A673 (cell line): ENCODE measurements at regions of chr13 and their contacts with region 1.

Region 1: GRCh38 chr13:41054212-41054877 is 7.0 kb upstream of the WBP4 start:
- DNase-seq: peak; percentile 77
- H3K4me3 ChIP-seq: no peak overlapping the region
- H3K27ac ChIP-seq: no peak overlapping the region
- H3K4me1 ChIP-seq: peaks cover 14% of the 10 kb centered on the region
- H3K27me3 ChIP-seq: no peaks in the 10 kb centered on the region
- CTCF ChIP-seq: peak; percentile 76

Region 2: DNA sequence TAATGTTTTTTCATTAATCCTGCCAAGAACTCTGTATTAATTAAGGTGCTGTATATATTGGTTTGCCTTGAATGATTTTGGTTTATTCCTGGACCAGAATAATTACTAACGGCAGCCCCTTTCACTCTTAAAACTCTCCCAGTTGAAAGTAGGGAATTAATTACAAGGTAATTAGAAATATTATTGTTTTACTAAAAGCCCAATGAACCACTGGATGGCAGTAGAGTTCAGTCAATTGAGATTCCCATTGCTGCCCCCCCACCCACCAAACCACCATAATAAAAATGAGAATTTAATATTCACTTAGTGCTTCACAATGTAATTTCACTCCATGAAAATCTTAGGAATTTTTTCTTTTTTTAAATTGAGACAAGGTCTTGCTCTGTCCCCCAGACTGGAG is 20.7 kb after region 1 on chr13:
- CTCF ChIA-PET with region 1: no interaction called
- POLR2A ChIA-PET with region 1: no interaction called
- intact Hi-C with region 1: no loop called
- DNase-seq: peak; percentile 40
- H3K4me3 ChIP-seq: no peak overlapping the region
- H3K27ac ChIP-seq: no peak overlapping the region
- H3K4me1 ChIP-seq: no peaks in the 10 kb centered on the region
- H3K27me3 ChIP-seq: no peaks in the 10 kb centered on the region
- CTCF ChIP-seq: peak; percentile 59

Region 3: DNA sequence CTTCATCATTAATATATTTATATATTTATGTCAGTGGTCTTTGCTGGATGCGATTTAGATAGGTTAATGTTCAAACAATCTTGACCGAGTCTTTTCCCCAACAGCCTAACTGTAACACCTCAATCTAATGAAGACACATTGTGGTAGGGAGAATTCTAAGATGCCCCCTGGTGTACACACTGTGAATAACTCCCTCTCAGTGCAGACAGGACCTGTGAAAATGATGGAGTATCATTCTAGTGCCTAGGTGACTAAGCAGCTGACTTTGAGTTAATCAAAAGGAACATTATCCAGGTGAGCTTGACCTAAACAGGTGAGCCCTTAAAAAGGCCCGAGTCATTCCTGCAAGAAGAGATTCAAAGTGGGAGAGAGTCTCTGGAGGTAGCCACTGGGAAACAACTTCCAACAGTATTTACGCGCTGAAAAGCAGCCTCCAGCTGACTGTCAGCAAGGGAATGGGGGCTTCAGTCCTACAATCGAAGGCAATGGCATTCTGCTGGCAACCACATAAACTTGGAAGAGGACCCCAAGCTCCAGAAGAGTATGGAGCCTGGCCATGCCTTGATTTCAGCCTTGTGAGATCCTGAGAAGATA is 168.0 kb after region 1 on chr13:
- CTCF ChIA-PET with region 1: interaction called, 11 read pairs
- POLR2A ChIA-PET with region 1: no interaction called
- intact Hi-C with region 1: no loop called
- DNase-seq: peak; percentile 66
- H3K4me3 ChIP-seq: no peak overlapping the region
- H3K27ac ChIP-seq: no peak overlapping the region
- H3K4me1 ChIP-seq: no peaks in the 10 kb centered on the region
- H3K27me3 ChIP-seq: no peaks in the 10 kb centered on the region
- CTCF ChIP-seq: peak; percentile 84

Region 4: DNA sequence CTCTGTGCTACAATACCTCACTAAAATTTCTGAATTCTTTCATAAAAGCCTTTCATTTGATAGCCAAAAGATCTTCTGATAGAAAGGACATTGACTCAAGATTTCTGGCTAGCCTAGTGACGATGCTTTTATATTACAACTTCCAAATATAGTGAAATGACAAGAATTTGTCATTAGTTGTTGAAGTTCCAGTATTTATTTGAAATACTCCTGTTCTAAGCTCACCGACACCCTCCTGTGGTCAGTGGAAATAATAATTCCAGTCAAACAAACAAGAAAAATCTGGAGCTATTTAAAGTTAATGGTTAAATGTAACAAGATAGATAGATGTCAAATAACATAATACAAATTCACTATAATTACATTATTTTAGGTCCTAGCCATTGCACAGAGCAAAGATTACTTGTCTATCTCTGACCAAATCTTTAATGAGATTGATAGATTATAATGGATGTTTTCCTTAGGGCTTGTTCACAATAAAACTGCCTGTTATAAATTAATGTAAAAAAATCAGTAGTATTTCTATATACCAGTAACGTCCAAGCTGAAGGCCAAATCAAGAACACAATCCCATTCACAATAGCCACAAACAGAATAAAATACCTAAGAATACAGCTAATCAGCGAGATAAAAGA is 598.5 kb after region 1 on chr13:
- CTCF ChIA-PET with region 1: no interaction called
- POLR2A ChIA-PET with region 1: no interaction called
- intact Hi-C with region 1: loop called (anchors 10 kb)
- DNase-seq: peak; percentile 52
- H3K4me3 ChIP-seq: no peak overlapping the region
- H3K27ac ChIP-seq: no peak overlapping the region
- H3K4me1 ChIP-seq: no peaks in the 10 kb centered on the region
- H3K27me3 ChIP-seq: no peaks in the 10 kb centered on the region
- CTCF ChIP-seq: peak; percentile 68